Naive thymus-derived CD4-positive, alpha-beta T cell (primary cell): ENCODE measurements at regions of chr2 and their contacts with region 1.

Region 1: GRCh38 chr2:68516051-68516955 is 48.9 kb downstream of the APLF start:
- DNase-seq: peak in 4 of 9 donors; percentile 16 to 46 (median 28)
- ATAC-seq: no peak
- H3K4me3 ChIP-seq: no peak overlapping the region
- H3K4me3 Mint-ChIP-seq: no peak overlapping the region
- H3K27ac ChIP-seq: no peak overlapping the region
- H3K27ac Mint-ChIP-seq: peak overlapping the region in 3 of 9 donors; percentile 11 to 60 (median 59)
- H3K4me1 ChIP-seq: no peaks in the 10 kb centered on the region
- H3K4me1 Mint-ChIP-seq: peaks cover 0 to 10% (median 0%) of the 10 kb centered on the region in 7 donors
- H3K27me3 ChIP-seq: no peaks in the 10 kb centered on the region
- H3K27me3 Mint-ChIP-seq: no peaks in the 10 kb centered on the region

Region 2: DNA sequence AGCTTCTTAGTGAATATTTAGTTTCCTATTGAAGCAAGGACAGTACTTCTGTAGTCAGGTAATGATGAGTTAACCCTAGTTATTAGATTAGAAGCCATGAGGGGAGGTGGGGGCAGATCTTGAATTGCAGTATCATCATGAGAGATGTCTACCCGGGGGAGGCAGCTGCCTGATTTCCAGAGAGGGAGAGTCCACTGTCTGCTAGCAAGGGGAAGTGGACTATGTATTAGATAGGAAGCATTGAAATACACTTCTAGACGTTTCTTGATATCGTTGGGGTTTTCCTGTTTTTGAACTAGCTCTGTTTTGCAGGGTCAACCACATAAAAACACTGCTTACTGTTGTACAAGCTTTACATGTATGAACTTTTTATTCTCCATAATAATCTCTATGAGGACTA is 10.1 kb before region 1 on chr2:
- CTCF ChIA-PET with region 1: no interaction called
- POLR2A ChIA-PET with region 1: no interaction called
- intact Hi-C with region 1: loop called in 1 of 2 experiments (anchors 1 kb)
- DNase-seq: no peak
- ATAC-seq: peak; percentile 60
- H3K4me3 ChIP-seq: no peak overlapping the region
- H3K4me3 Mint-ChIP-seq: peak overlapping the region; percentile 4 to 57 (median 29)
- H3K27ac ChIP-seq: no peak overlapping the region
- H3K27ac Mint-ChIP-seq: peak overlapping the region in 3 of 9 donors; percentile 5 to 51 (median 38)
- H3K4me1 ChIP-seq: peaks cover 9 to 12% of the 10 kb centered on the region in 2 donors
- H3K4me1 Mint-ChIP-seq: peaks cover 9 to 24% (median 17%) of the 10 kb centered on the region in 7 donors
- H3K27me3 ChIP-seq: no peaks in the 10 kb centered on the region
- H3K27me3 Mint-ChIP-seq: no peaks in the 10 kb centered on the region

Region 3: GRCh38 chr2:68537809-68538208 is 21.5 kb after region 1 on chr2:
- CTCF ChIA-PET with region 1: no interaction called
- POLR2A ChIA-PET with region 1: no interaction called
- intact Hi-C with region 1: loop called in 1 of 2 experiments (anchors 1 kb)
- DNase-seq: no peak
- ATAC-seq: no peak
- H3K4me3 ChIP-seq: no peak overlapping the region
- H3K4me3 Mint-ChIP-seq: no peak overlapping the region
- H3K27ac ChIP-seq: no peak overlapping the region
- H3K27ac Mint-ChIP-seq: no peak overlapping the region
- H3K4me1 ChIP-seq: no peaks in the 10 kb centered on the region
- H3K4me1 Mint-ChIP-seq: peaks cover 0 to 4% (median 0%) of the 10 kb centered on the region in 7 donors
- H3K27me3 ChIP-seq: no peaks in the 10 kb centered on the region
- H3K27me3 Mint-ChIP-seq: no peaks in the 10 kb centered on the region

Region 4: DNA sequence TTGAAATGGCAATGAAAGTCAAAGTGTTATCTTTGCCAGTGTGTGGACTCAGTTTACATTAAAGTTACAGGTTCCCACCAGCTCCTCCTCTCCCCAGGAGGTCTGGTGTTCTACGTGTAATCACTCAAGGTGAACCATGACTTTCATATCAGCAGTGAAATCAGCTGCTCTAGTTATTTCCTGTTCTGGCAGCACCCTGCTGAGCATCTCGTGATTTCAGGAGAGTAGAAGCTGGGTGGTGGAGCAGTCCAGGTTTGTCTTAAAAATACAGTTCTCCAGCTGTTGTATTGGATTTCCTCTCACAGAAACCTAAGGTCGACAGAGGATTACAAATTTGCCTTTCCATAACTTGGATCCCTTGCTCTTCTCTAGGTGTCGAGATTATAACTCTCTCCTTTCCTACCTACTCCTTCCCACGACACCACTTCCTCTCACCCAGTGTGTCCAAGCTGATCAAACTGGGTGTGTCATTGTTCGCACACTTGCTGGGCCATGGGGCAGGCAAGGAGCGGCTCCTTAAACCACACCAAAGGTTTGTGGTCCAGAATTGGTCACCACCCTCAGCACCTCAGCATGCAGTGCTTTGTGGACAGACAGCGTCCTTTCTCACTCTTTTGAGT is 205.3 kb after region 1 on chr2:
- CTCF ChIA-PET with region 1: no interaction called
- POLR2A ChIA-PET with region 1: no interaction called
- intact Hi-C with region 1: loop called in 1 of 2 experiments (anchors 2 kb)
- DNase-seq: peak in 7 of 9 donors; percentile 52 to 69 (median 61)
- ATAC-seq: peak; percentile 83
- H3K4me3 ChIP-seq: peak overlapping the region; percentile 9
- H3K4me3 Mint-ChIP-seq: peak overlapping the region; percentile 76 to 91 (median 82)
- H3K27ac ChIP-seq: peak overlapping the region; percentile 68
- H3K27ac Mint-ChIP-seq: peak overlapping the region; percentile 78 to 97 (median 95)
- H3K4me1 ChIP-seq: peaks cover 72 to 87% of the 10 kb centered on the region in 2 donors
- H3K4me1 Mint-ChIP-seq: peaks cover 65 to 96% (median 93%) of the 10 kb centered on the region in 7 donors
- H3K27me3 ChIP-seq: no peaks in the 10 kb centered on the region
- H3K27me3 Mint-ChIP-seq: no peaks in the 10 kb centered on the region

Region 5: GRCh38 chr2:69755862-69756467 is 1239.7 kb after region 1 on chr2:
- CTCF ChIA-PET with region 1: no interaction called
- POLR2A ChIA-PET with region 1: no interaction called
- intact Hi-C with region 1: no loop called
- DNase-seq: peak in 1 of 9 donors; percentile 31
- ATAC-seq: peak; percentile 51
- H3K4me3 ChIP-seq: no peak overlapping the region
- H3K4me3 Mint-ChIP-seq: peak overlapping the region in 1 of 10 donors; percentile 53
- H3K27ac ChIP-seq: no peak overlapping the region
- H3K27ac Mint-ChIP-seq: peak overlapping the region in 2 of 9 donors; percentile 36 to 71
- H3K4me1 ChIP-seq: no peaks in the 10 kb centered on the region
- H3K4me1 Mint-ChIP-seq: peaks cover 0 to 34% (median 0%) of the 10 kb centered on the region in 7 donors
- H3K27me3 ChIP-seq: no peaks in the 10 kb centered on the region
- H3K27me3 Mint-ChIP-seq: no peaks in the 10 kb centered on the region